ENCODE measurements at regions of chr4 and their contacts with region 1.

Region 1: DNA sequence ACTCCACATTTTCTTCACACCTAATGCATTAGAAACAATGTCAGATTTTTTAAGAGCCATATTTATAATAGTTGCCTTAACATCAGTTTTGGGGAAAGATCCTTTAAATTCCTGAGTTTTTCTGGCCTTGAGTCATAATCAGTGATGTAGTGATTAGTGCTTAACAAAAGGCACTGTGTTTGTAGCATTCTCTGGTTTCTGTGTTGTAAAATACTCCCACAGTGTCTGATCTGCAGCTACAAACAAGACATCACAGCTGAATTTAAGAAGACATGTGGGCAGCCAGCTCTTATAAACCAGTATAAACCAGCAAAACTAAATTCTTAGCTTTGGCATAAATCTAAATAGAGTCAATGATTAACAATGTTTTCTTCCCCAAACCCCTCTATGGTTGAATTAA is 233.8 kb downstream of the FSTL5 start:
- DNase-seq: peak; percentile 68
- H3K4me3 ChIP-seq: no peak overlapping the region
- H3K27ac ChIP-seq: peak overlapping the region; percentile 56
- H3K4me1 ChIP-seq: peaks cover 20% of the 10 kb centered on the region
- H3K27me3 ChIP-seq: no peaks in the 10 kb centered on the region
- CTCF ChIP-seq: no peak

Region 2: DNA sequence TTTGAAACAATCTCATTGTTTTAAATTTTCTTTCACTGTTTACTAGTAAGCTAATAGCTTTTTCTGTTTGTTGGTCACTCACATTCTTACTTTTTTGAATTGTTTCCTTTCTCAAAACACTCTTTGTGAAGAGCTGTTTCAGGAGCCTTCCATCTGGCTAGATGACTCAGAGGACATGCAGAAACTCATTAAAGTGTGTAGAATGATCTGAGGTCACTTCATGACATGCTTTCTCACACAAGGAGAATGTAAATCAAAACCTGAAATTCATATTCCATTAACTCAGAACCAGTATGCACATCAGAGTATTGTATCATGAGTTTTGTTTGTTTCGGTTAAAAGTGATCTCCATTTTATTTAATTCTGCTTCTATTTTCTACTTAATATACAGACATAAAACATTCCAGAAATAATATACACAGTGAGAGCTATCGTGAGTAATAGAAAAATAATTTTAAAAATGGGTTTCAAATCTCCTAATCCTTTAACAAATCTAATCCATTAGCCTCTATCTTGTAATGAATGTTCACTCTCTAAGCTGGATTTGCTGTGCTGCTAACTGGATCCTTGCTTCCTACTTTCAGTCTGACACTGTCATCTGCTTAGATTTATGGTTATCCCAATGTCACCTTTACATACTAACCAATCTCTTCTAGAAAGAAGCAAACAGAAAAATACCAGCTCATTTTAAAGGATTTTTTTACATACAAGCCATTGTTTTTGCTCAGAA is 215.8 kb before region 1 on chr4:
- CTCF ChIA-PET with region 1: interaction called, 11 read pairs
- dilution Hi-C with region 1: no loop called
- in situ Hi-C with region 1: no loop called
- intact Hi-C with region 1: no loop called
- DNase-seq: peak; percentile 95
- H3K4me3 ChIP-seq: peak overlapping the region in 1 of 3 experiments; percentile 9
- H3K27ac ChIP-seq: peak overlapping the region; percentile 91
- H3K4me1 ChIP-seq: peaks cover 14% of the 10 kb centered on the region
- H3K27me3 ChIP-seq: no peaks in the 10 kb centered on the region
- CTCF ChIP-seq: no peak

Region 3: GRCh38 chr4:162116095-162116779 is 186.3 kb after region 1 on chr4:
- CTCF ChIA-PET with region 1: no interaction called
- dilution Hi-C with region 1: no loop called
- in situ Hi-C with region 1: no loop called
- intact Hi-C with region 1: no loop called
- DNase-seq: no peak
- H3K4me3 ChIP-seq: no peak overlapping the region
- H3K27ac ChIP-seq: no peak overlapping the region
- H3K4me1 ChIP-seq: no peaks in the 10 kb centered on the region
- H3K27me3 ChIP-seq: peaks cover 3% of the 10 kb centered on the region
- CTCF ChIP-seq: no peak

Measured in mammary epithelial cell (primary cell).